ENCODE measurements at regions of chr1 and their contacts with region 1.

Region 1: GRCh38 chr1:109821221-109821669 is 57.5 kb upstream of the EPS8L3 start:
- DNase-seq: peak; percentile 74
- H3K4me3 Mint-ChIP-seq: no peak overlapping the region
- H3K27ac Mint-ChIP-seq: no peak overlapping the region
- H3K4me1 Mint-ChIP-seq: peaks cover 40% of the 10 kb centered on the region
- H3K27me3 Mint-ChIP-seq: no peaks in the 10 kb centered on the region

Region 2: GRCh38 chr1:109802901-109803561 is 18.2 kb before region 1 on chr1:
- CTCF ChIA-PET with region 1: interaction called, 8 read pairs
- POLR2A ChIA-PET with region 1: interaction called, 4 read pairs
- intact Hi-C with region 1: loop called (anchors 1 kb)
- DNase-seq: peak; percentile 45
- H3K4me3 Mint-ChIP-seq: peak overlapping the region; percentile 70
- H3K27ac Mint-ChIP-seq: peak overlapping the region; percentile 99
- H3K4me1 Mint-ChIP-seq: peaks cover 68% of the 10 kb centered on the region
- H3K27me3 Mint-ChIP-seq: no peaks in the 10 kb centered on the region

Region 3: DNA sequence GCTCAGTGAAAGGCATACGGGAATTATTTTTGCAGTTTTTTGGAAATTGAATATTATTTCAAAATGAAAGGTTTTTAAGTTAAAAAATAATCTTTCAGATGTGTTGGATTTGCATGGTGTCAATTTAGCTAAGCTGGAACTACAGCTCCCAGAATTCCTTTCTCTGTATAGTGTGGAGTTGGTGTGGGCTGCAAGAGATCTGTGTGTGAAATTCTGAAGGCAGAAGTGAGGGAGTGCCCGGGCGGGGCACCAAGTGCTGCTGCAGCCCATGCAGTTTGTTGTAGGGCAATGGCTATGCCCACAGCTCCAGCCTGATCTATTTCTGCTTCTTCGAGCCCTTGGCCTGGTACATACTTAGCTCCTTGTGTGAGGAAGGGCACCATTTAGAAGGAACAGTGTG is 28.9 kb after region 1 on chr1:
- CTCF ChIA-PET with region 1: no interaction called
- POLR2A ChIA-PET with region 1: no interaction called
- intact Hi-C with region 1: loop called (anchors 1 kb)
- DNase-seq: no peak
- H3K4me3 Mint-ChIP-seq: no peak overlapping the region
- H3K27ac Mint-ChIP-seq: no peak overlapping the region
- H3K4me1 Mint-ChIP-seq: peaks cover 11% of the 10 kb centered on the region
- H3K27me3 Mint-ChIP-seq: peaks cover 3% of the 10 kb centered on the region

Region 4: DNA sequence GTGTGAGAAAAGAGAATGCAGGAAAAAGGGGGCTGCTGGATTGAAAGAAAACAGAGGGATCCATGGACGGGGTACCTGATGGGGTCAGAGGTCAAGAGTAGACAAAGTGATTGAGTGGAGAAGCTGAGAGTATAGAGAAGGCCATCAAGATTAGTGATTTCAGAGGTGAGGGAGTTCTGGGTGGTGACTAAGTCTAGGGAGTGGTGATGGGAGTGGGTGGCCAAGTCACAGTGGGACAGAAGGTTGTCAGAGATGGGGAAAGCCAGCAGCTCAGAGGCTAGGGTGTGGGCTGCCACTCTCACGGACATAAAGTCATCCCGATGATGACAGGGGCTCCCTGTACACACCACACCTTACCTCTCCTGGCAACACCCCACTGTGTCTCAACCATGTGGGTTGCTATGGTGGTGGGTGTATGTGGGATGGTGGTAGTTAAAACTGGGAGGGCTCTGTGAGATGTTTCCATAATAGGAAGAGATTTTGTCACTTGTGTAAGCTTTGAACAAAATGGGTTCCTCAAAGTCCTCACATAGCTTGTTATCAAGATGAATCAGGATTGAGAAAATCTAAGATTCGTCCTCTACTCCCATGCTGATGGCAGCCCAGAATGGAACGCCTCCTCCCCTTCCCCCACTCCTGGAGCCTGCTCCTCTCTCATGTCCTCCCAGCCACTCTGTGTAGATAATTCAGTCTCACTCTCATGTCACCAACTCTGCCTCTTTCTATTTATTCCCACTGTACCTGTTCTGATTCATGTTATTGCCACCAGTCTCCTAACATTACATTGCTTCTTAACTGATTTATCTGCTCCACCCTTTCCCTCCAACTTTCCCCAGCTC is 69.1 kb after region 1 on chr1:
- CTCF ChIA-PET with region 1: no interaction called
- POLR2A ChIA-PET with region 1: no interaction called
- intact Hi-C with region 1: loop called (anchors 1 kb)
- DNase-seq: peak; percentile 87
- H3K4me3 Mint-ChIP-seq: peak overlapping the region; percentile 1
- H3K27ac Mint-ChIP-seq: peak overlapping the region; percentile 85
- H3K4me1 Mint-ChIP-seq: peaks cover 35% of the 10 kb centered on the region
- H3K27me3 Mint-ChIP-seq: no peaks in the 10 kb centered on the region

Region 5: DNA sequence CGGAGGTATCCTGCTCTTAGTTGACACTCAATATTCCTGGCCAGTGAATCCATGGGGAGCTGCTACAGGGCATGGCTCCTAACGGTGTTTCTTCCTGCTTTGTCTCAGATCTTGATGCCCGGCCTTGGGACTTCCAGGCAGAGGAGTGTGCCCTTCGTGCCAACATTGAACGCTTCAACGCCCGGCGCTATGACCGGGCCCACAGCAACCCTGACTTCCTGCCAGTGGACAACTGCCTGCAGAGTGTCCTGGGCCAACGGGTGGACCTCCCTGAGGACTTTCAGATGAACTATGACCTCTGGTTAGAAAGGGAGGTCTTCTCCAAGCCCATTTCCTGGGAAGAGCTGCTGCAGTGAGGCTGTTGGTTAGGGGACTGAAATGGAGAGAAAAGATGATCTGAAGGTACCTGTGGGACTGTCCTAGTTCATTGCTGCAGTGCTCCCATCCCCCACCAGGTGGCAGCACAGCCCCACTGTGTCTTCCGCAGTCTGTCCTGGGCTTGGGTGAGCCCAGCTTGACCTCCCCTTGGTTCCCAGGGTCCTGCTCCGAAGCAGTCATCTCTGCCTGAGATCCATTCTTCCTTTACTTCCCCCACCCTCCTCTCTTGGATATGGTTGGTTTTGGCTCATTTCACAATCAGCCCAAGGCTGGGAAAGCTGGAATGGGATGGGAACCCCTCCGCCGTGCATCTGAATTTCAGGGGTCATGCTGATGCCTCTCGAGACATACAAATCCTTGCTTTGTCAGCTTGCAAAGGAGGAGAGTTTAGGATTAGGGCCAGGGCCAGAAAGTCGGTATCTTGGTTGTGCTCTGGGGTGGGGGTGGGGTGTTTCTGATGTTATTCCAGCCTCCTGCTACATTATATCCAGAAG is 232.5 kb after region 1 on chr1:
- CTCF ChIA-PET with region 1: no interaction called
- POLR2A ChIA-PET with region 1: no interaction called
- intact Hi-C with region 1: no loop called
- DNase-seq: peak; percentile 79
- H3K4me3 Mint-ChIP-seq: no peak overlapping the region
- H3K27ac Mint-ChIP-seq: no peak overlapping the region
- H3K4me1 Mint-ChIP-seq: no peaks in the 10 kb centered on the region
- H3K27me3 Mint-ChIP-seq: no peaks in the 10 kb centered on the region